ENCODE measurements at regions of chr7 and their contacts with region 1.

Region 1: DNA sequence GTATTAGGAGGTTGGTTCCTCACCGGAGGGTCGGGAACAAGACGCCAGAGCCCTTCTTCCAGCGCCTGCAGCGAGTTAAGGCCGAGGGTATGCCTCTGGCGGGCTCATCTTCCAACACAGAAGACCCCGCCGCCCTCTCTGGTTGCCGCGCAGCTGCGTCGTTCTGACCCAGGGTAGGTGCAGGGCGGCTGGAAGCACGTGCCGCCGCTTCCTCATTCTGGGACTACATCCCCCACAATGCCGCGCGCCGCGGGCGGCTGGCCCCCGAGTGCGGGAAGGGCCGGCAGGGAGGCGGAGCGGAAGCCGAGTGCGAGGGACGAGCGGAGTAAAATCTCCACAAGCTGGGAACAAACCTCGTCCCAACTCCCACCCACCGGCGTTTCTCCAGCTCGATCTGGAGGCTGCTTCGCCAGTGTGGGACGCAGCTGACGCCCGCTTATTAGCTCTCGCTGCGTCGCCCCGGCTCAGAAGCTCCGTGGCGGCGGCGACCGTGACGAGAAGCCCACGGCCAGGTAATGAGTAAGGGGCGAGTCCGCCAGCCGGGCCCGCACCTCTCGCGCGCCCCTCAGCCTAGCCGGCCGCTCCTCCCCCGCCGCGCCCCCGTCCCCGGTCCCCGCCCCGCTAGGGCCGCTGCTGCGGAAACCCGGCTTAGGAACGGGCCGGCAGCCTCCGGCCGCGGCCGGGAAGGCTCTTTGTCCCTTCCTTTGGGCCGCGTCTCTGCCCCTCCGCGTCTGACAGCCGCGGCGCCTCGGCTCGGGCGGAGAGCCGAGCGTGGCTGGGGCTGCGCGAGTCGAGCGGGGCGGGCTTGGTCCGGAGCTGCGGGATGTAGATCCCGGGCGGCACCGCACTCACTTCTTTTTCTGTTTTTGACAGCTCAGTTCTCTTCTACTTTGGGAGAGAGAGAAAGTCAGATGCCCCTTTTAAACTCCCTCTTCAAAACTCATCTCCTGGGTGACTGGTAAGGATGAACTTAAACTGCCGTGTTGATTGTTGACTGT is at the start of gene CCDC126:
- DNase-seq: peak; percentile 37
- H3K4me3 ChIP-seq: peak within 1 kb of the TSS; percentile 64 to 88 (median 72)
- H3K27ac ChIP-seq: peak within 1 kb of the TSS; percentile 90 to 98 (median 96)
- H3K4me1 ChIP-seq: peaks cover 0 to 40% (median 13%) of the 10 kb centered on the region in 3 donors
- H3K27me3 ChIP-seq: no peaks in the 10 kb centered on the region
- CTCF ChIP-seq: no peak
- POLR2A ChIP-seq: peak in 2 of 4 donors; percentile 31 to 61
- total RNA-seq, gene CCDC126: 6.3 to 13.7 (median 7.6) TPM

Region 2: GRCh38 chr7:23315366-23315765 is 282.0 kb before region 1 on chr7:
- intact Hi-C with region 1: no loop called
- DNase-seq: no peak
- H3K4me3 ChIP-seq: no peak overlapping the region
- H3K27ac ChIP-seq: no peak overlapping the region
- H3K4me1 ChIP-seq: no peaks in the 10 kb centered on the region
- H3K27me3 ChIP-seq: peaks cover 0 to 18% (median 0%) of the 10 kb centered on the region in 4 donors
- CTCF ChIP-seq: no peak
- POLR2A ChIP-seq: no peak

Region 3: DNA sequence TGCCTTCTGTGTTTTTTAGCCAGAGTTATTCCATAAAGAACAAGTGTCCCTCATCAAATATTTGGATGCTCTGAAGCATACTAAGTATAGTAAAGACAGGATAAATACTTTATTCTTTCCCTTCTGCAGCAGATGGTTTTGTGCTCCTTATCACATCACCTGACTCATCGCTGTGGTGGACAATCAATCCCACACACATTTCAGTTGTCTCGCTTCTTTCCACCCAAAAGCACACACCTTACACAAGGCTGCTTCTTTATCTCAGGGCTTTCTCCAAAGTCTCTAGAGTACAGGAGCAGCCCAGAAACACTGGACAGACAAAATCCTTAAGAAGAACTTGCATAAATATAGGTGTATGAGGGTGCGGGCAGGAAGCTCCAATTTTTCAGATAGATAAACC is 170.5 kb before region 1 on chr7:
- intact Hi-C with region 1: no loop called
- DNase-seq: no peak
- H3K4me3 ChIP-seq: no peak overlapping the region
- H3K27ac ChIP-seq: no peak overlapping the region
- H3K4me1 ChIP-seq: no peaks in the 10 kb centered on the region
- H3K27me3 ChIP-seq: peaks cover 0 to 16% (median 0%) of the 10 kb centered on the region in 4 donors
- CTCF ChIP-seq: no peak
- POLR2A ChIP-seq: no peak

Region 4: GRCh38 chr7:23679898-23680413 is 82.6 kb after region 1 on chr7 and contains the start of gene FAM221A:
- intact Hi-C with region 1: loop called (anchors 10 kb)
- DNase-seq: peak; percentile 36
- H3K4me3 ChIP-seq: peak within 1 kb of the TSS; percentile 62 to 88 (median 69)
- H3K27ac ChIP-seq: peak within 1 kb of the TSS; percentile 78 to 92 (median 88)
- H3K4me1 ChIP-seq: peaks cover 3 to 25% (median 5%) of the 10 kb centered on the region in 3 donors
- H3K27me3 ChIP-seq: no peaks in the 10 kb centered on the region
- CTCF ChIP-seq: peak; percentile 45 to 84 (median 80)
- POLR2A ChIP-seq: peak in 1 of 4 donors; percentile 19
- total RNA-seq, gene FAM221A: 4.2 to 17.7 (median 7.7) TPM

Measured in esophagus squamous epithelium (tissue), 5 donors.